ENCODE measurements at regions of chr10 and their contacts with region 1.

Region 1: DNA sequence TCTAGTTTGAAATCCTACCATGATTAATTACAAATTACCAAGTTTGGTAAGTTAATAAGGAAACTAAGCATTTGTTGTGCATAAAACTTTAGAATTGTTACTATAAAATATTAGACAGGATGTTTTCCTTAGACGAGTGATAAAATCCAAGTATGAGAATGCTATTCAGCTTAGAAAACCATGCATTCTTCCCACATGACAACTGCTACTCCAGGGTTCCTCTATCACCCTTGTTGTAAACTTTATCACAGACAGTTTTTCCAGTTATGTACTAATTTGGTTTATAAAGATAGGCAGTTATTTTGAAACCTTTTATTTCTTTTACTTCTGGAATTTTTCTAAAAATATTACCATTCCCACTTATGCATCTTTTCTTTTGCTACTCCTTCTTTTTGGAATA is 52.0 kb downstream of the SIRT1 start:
- DNase-seq: no peak
- ATAC-seq: no peak
- H3K4me3 ChIP-seq: no peak overlapping the region
- H3K4me3 Mint-ChIP-seq: no peak overlapping the region
- H3K27ac ChIP-seq: no peak overlapping the region
- H3K27ac Mint-ChIP-seq: no peak overlapping the region
- H3K4me1 ChIP-seq: no peaks in the 10 kb centered on the region
- H3K4me1 Mint-ChIP-seq: no peaks in the 10 kb centered on the region
- H3K27me3 ChIP-seq: no peaks in the 10 kb centered on the region
- H3K27me3 Mint-ChIP-seq: no peaks in the 10 kb centered on the region

Region 2: GRCh38 chr10:67587771-67588170 is 348.6 kb before region 1 on chr10:
- CTCF ChIA-PET with region 1: no interaction called
- POLR2A ChIA-PET with region 1: no interaction called
- DNase-seq: no peak
- ATAC-seq: no peak
- H3K4me3 ChIP-seq: no peak overlapping the region
- H3K4me3 Mint-ChIP-seq: no peak overlapping the region
- H3K27ac ChIP-seq: no peak overlapping the region
- H3K27ac Mint-ChIP-seq: no peak overlapping the region
- H3K4me1 ChIP-seq: no peaks in the 10 kb centered on the region
- H3K4me1 Mint-ChIP-seq: no peaks in the 10 kb centered on the region
- H3K27me3 ChIP-seq: peaks cover 0 to 5% of the 10 kb centered on the region in 2 experiments
- H3K27me3 Mint-ChIP-seq: peaks cover 4 to 8% of the 10 kb centered on the region in 2 donors

Region 3: DNA sequence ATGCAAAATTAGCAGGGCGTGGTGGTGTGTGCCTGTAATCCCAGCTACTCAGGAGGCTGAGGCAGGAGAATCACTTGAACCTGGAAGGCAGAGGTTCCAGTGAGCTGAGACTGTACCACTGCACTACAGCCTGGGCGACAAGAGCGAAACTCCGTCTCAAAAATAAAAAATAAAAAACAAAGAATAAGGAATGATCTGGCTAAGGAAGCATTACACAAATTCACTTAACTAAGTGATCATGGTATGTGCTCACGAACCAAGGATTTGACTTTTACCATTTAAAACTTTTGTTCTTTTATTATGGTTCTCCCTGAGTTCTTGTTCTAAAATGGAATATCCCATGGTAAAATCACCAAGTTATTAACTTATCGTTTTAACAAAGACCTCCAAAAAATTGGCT is 19.2 kb after region 1 on chr10:
- CTCF ChIA-PET with region 1: interaction called in 1 of 2 experiments, 11 read pairs
- POLR2A ChIA-PET with region 1: no interaction called
- DNase-seq: no peak
- ATAC-seq: no peak
- H3K4me3 ChIP-seq: no peak overlapping the region
- H3K4me3 Mint-ChIP-seq: no peak overlapping the region
- H3K27ac ChIP-seq: no peak overlapping the region
- H3K27ac Mint-ChIP-seq: no peak overlapping the region
- H3K4me1 ChIP-seq: no peaks in the 10 kb centered on the region
- H3K4me1 Mint-ChIP-seq: peaks cover 0 to 3% (median 0%) of the 10 kb centered on the region in 3 donors
- H3K27me3 ChIP-seq: no peaks in the 10 kb centered on the region
- H3K27me3 Mint-ChIP-seq: no peaks in the 10 kb centered on the region

Region 4: GRCh38 chr10:67969875-67970274 is 33.5 kb after region 1 on chr10:
- CTCF ChIA-PET with region 1: interaction called in 1 of 2 experiments, 11 read pairs
- POLR2A ChIA-PET with region 1: no interaction called
- DNase-seq: no peak
- ATAC-seq: no peak
- H3K4me3 ChIP-seq: no peak overlapping the region
- H3K4me3 Mint-ChIP-seq: no peak overlapping the region
- H3K27ac ChIP-seq: no peak overlapping the region
- H3K27ac Mint-ChIP-seq: no peak overlapping the region
- H3K4me1 ChIP-seq: no peaks in the 10 kb centered on the region
- H3K4me1 Mint-ChIP-seq: peaks cover 12 to 15% (median 14%) of the 10 kb centered on the region in 3 donors
- H3K27me3 ChIP-seq: no peaks in the 10 kb centered on the region
- H3K27me3 Mint-ChIP-seq: no peaks in the 10 kb centered on the region

Measured in T-cell (primary cell).